AG04449 (cell line): ENCODE measurements at regions of chr6 and their contacts with region 1.

Region 1: GRCh38 chr6:99868074-99868702 is 125.8 kb downstream of the MCHR2 start:
- DNase-seq: no peak
- H3K4me3 ChIP-seq: peak overlapping the region; percentile 24
- CTCF ChIP-seq: peak; percentile 80

Region 2: DNA sequence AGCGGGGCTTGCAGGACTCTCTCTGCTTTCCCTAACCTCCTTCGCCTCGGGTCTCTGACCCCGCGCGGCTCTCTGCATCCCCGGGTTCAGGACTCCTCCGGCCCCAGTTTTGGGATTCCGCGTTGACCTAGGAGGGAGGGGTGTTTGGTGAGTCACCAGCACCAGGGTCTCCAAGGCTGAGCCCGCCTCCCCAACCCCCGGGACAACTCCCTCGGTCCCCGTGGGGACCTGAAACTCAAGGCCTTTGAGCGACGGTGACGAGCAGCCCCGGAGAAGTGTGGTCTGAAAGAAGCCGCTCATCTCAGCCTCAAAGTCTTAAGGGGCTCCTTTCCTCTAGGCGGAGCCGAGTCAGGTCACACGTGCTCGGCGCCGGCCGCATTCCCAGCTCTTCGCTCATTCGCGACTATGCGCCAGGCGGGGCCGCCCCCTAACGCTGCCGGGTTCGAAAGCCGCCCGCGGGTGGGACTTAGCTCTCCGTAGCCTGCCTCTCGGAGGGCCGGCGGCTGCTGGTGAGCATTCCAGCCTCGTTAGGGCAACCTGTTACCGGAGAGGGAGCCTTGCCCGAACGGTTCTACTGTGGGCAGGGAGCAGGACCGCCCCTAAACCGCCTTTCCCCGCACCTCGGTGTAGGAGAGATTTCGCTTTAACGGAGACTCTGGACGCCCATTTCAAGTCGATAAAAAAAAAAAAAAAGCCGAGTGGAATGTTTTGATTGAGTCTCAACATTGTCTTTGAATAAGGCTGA is 264.6 kb before region 1 on chr6:
- CTCF ChIA-PET with region 1: no interaction called
- POLR2A ChIA-PET with region 1: no interaction called
- DNase-seq: no peak
- H3K4me3 ChIP-seq: peak overlapping the region; percentile 36
- CTCF ChIP-seq: no peak

Region 3: DNA sequence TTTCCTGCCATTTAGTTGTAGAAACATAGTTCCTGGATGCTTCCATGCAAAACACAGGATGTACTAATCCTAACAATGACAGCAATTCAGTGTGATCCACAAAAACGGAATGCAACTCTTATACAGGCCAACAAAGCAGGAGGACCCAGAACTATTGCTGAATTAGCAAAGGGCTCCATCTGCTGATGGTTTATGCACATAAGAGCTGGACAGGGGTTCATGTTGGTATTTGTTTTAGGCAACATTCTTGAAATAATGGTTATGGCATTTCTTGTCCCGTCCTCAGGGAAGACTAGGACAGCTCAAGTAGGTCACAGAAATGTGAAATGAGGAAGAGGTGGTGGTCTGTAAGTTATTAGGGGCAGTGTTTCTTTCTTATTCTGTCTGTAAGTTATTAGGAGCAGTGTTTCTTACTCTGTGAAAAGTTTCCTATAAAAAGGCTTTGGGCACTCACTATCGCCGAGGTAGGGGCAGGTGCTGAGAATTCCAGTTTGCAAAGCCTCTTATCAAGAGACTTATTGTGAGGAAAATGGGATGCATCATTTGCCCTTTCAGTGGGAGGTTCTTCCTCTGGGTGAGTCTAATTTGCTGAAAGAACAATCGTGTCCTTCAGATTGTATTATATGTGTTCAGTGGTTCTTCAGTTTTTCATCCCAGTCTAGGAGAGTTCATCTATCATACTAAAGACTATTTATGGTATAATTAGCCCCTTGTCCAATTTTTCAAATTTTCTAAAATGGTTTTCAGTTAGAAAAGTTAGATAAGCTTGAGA is 45.3 kb before region 1 on chr6:
- CTCF ChIA-PET with region 1: no interaction called
- POLR2A ChIA-PET with region 1: no interaction called
- DNase-seq: peak; percentile 19
- H3K4me3 ChIP-seq: no peak overlapping the region
- CTCF ChIP-seq: peak; percentile 31

Region 4: DNA sequence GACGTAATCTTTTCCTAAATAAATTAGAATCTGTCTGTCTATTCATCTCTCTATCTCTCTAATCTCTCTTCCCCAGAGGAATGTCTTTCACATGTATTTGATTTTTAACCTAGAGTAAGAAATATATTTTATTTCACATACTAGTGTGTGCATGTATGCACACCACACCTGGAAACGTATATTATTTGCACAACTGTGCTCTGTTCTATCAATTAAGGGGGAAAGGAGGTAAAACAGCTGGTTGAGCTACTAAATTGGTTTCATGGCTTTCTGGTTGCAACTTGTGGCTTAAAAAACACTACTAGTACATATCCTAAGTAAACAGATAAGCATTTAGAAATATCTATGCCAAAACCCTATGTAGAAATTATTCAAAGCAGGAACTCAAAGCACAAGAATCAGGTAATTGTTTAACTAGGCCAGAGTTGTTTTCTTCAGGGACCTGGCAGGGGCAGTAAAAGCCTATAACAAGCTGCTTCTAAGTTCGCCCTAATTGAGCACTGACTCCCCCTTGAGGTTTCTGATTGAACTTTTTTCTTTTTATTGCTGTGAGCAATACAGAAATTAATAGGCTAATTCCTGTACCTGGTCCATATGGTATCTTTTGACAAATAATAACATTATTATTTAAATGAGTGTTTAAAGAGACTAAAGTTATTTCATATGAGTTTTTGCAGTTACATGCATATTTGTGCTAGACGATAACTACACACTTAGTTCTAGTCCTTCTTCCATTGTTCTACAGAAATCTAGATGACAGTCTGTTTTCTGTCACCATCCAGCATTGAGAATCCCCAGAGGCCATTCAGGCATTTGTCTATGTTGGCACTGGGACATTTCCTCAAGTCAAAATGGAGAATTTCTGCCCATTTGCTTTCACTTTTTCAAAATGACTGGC is 37.3 kb after region 1 on chr6:
- CTCF ChIA-PET with region 1: interaction called, 64 read pairs
- POLR2A ChIA-PET with region 1: no interaction called
- DNase-seq: peak; percentile 7
- H3K4me3 ChIP-seq: no peak overlapping the region
- CTCF ChIP-seq: peak; percentile 71

Region 5: GRCh38 chr6:100001915-100002388 is 133.8 kb after region 1 on chr6:
- CTCF ChIA-PET with region 1: interaction called, 55 read pairs
- POLR2A ChIA-PET with region 1: no interaction called
- DNase-seq: peak; percentile 16
- H3K4me3 ChIP-seq: no peak overlapping the region
- CTCF ChIP-seq: peak; percentile 88

Region 6: DNA sequence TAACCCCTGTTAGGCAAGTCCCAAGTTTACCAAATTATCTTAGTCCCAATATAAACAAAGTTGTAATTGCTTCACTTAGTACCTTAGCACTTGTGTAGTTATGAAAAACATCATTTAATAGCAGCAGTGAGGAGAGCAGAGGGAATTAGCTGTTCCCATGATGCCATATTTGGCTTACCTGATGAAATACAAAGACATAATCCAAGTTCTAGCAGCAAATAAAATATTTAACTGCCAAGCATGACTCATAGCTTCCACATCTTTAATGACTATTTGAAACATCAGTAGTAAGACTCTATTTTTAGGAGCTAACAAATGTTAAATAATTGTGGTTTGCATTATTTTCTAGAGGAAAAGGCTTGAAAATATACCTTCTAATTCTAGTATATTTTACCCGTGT is 219.8 kb after region 1 on chr6:
- CTCF ChIA-PET with region 1: interaction called, 19 read pairs
- POLR2A ChIA-PET with region 1: no interaction called
- DNase-seq: peak; percentile 65
- H3K4me3 ChIP-seq: no peak overlapping the region
- CTCF ChIP-seq: no peak

Region 7: GRCh38 chr6:100099189-100100074 is 231.2 kb after region 1 on chr6:
- CTCF ChIA-PET with region 1: interaction called, 350 read pairs
- POLR2A ChIA-PET with region 1: no interaction called
- DNase-seq: no peak
- H3K4me3 ChIP-seq: no peak overlapping the region
- CTCF ChIP-seq: peak; percentile 31

Region 8: GRCh38 chr6:100116411-100117194 is 248.4 kb after region 1 on chr6:
- CTCF ChIA-PET with region 1: interaction called, 24 read pairs
- POLR2A ChIA-PET with region 1: no interaction called
- DNase-seq: no peak
- H3K4me3 ChIP-seq: no peak overlapping the region
- CTCF ChIP-seq: peak; percentile 50

Region 9: GRCh38 chr6:100283283-100283682 is 415.1 kb after region 1 on chr6:
- CTCF ChIA-PET with region 1: no interaction called
- POLR2A ChIA-PET with region 1: no interaction called
- DNase-seq: peak; percentile 19
- H3K4me3 ChIP-seq: no peak overlapping the region
- CTCF ChIP-seq: no peak

Region 10: DNA sequence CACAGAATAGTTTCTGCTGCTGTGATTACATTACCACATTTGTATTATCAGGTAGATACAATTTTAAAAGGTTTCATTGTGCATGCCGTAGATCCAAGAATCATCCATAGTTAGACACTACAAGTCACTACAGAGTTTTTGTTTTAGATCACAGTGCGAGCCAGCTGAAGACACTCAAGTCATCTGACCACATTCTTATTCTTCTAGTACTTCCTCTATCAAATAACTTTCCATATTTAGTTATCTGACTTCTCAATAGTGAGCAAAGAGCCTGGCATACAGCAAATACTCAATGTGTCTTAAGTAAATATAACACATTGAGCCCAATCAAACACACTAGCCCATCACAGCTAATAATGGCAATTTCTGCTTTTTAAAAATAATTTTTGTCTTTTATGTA is 817.6 kb after region 1 on chr6:
- CTCF ChIA-PET with region 1: no interaction called
- POLR2A ChIA-PET with region 1: no interaction called
- DNase-seq: no peak
- H3K4me3 ChIP-seq: no peak overlapping the region
- CTCF ChIP-seq: no peak